Right ventricle myocardium superior (tissue), 1 donor: ENCODE measurements at regions of chr5 and their contacts with region 1.

Region 1: GRCh38 chr5:154811653-154812365 is 38.6 kb downstream of the FAXDC2 start:
- DNase-seq: peak; percentile 71
- ATAC-seq: peak; percentile 75

Region 2: DNA sequence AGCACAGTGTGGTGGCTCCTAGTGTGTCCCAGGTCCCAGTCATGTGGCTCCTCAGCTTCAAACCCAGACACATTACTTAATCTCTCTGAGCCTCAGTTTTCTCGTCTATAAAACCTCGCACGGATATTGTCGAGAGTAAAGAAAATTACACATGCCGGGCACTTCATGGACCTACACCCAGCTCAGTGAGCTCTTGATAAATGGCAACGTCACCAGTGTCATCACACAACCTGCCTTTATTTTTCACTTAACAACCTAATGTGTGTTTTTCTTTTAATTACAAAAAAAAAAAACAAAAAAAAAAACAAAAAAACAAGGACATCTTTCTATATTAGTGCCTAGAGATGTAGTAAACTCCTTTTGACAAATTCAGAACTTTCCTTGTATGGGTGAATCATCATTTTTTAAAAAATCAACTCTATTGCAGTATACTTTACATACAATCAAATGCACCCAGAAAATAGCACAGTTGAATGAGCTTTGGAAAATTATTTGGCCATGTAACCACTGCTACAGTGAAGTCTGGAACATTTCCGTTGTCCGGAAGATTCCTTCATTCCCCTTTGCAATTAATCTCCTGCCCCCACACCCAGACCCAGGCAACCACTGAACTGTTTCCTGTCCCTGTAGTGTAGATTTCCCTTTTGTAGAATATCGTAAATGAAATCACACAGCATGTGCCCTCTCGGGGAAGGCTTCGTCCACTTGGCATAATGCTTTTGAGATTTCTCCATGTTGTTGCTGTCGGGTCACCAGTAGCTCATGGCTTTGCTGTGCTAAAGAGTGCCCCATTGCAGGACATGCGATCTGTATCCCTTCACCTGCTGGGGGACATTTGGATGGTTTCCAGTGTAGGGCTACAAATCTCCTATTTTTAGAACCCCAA is 157.1 kb before region 1 on chr5:
- intact Hi-C with region 1: loop called (anchors 5 kb)
- DNase-seq: no peak
- ATAC-seq: no peak

Region 3: DNA sequence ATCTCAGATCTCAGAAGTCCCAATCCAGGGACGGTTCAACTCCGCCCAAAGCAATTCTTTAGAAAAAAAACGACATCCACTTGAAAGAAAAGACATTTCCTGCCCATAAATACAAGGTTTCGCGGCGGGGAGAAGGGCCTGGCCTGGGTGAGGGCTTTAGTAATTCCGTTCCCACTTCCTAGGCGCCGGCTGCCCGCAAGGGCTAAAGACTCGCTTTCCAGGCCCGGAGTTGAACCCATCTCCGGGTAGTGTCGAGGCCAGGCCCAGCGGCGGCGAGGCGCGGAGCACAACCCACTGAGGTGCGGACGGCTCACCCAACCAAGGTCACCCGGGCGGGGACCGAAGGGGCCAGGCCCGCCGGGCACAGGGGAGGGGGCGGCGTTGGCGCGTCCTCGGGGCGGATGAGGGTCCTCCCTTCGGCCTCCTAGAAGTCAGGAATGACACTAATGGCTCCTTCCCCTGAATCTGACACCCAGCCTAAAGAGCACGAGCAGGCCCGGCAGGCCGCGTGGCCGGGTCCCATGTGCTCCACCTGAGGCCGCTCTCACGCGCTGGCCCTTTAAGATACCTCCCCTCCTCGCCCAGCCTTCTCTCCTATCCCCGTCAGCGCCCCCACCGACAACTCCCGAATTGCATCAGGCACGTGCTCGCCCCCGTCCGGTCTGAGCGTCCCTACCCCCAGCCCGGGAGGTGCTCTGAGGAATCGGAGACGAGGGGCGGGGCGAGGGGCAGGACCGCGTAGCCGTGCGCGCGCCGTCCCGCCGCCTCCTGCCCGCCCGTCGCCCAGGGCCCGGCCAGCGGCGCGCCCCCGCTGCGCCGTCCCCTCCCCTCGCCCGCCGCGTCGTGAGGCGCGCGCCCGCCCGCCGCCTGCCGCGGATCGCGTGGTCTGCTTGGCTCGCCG is 57.1 kb before region 1 on chr5:
- intact Hi-C with region 1: loop called (anchors 5 kb)
- DNase-seq: peak; percentile 100
- ATAC-seq: peak; percentile 92

Region 4: GRCh38 chr5:155064580-155064979 is 252.8 kb after region 1 on chr5:
- intact Hi-C with region 1: no loop called
- DNase-seq: no peak
- ATAC-seq: no peak